ENCODE measurements at regions of chr11 and their contacts with region 1.

Region 1: DNA sequence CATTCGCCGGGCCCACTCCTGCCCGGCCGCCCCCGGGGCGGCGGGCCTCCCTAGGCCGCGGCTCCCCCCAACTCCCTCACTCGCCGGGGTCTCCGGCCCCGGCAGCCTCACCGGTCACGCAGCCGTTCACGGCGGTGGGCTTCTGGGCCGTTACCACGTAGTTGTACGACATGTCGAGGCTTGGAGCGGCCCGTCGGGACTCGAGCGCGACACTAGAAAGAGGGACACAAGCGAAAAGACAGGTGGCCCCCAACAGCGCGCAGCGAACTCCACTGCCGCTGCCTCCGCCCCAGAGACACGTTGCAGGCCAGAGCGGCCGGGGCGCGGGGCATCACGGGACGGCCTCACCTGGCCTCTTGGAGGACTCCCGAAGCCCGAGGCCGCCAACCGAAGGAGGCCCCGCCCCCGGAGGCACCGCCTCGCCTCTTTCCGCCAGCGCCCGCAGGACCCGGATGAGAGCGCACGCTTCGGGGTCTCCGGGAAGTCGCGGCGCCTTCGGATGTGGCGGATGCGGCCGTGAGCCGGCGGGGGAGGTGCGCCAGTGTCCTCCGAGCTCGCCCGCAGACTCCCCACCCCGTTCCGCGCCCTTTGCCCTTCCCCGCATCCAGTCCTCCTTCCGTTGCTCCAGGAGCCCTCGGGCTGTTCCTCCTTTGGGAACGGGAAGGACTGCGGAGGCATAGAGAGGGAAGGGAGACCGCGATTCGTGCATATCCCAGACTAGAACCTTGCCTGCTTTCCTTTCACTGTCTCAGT is at the starts of genes DDB1 and TKFC:
- DNase-seq: peak; percentile 97
- H3K4me3 ChIP-seq: peak within 1 kb of the TSS; percentile 79 to 96 (median 92)
- H3K27ac ChIP-seq: peak within 1 kb of the TSS; percentile 86 to 95 (median 90)
- H3K4me1 ChIP-seq: peaks cover 0 to 32% (median 24%) of the 10 kb centered on the region in 4 donors
- H3K27me3 ChIP-seq: no peaks in the 10 kb centered on the region
- CTCF ChIP-seq: no peak
- EP300 ChIP-seq: peak in 1 of 4 donors; percentile 56
- POLR2A ChIP-seq: peak; percentile 65 to 67
- total RNA-seq, gene DDB1: 101 to 108 (median 105) TPM
- total RNA-seq, gene TKFC: 10.8 to 12.0 (median 11.8) TPM

Region 2: DNA sequence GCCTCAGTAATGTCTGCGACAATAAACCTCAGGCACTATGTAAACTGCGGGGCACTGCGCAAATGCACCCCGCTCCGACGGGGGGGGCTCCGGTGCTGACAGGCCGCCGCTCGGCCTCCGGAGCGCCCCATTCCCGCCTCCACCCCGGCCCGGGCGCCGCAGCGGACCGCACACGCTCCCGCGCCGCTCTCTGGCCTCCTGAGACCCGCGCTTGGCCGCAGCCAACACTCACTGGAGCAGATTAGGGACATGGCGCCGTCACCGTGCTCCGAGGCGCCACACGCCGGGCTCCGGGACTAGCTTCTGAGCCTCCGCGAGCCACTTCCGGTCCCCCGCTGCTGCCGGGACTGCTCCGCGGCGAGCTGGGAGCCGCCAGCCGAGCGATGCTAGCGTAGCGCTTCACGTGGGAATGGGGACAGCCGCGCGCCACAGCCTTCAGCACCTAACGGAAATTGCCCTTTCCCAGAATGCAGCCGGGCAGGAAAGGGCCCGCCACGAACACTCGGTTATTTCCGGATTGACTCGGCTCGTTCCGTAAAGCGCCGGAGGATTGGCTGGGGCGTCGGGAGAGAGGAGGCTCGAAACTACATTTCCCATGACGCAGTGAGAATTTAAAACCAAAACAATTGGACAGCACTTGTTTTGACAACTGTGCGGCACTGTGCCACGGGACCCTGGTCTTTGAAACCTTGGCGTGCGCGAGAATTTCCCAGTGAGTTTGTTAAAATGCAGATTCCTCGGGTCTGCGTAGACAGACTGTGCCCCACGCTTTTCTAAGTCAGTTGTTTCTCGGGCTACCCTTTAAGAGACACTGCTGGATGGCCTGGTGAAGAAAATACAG is 426.6 kb before region 1 on chr11 and contains the start of gene PRPF19:
- intact Hi-C with region 1: loop called (anchors 10 kb)
- DNase-seq: peak; percentile 98
- H3K4me3 ChIP-seq: peak within 1 kb of the TSS; percentile 89 to 99 (median 95)
- H3K27ac ChIP-seq: peak within 1 kb of the TSS; percentile 97 to 100 (median 98)
- H3K4me1 ChIP-seq: peaks cover 0 to 29% (median 24%) of the 10 kb centered on the region in 4 donors
- H3K27me3 ChIP-seq: no peaks in the 10 kb centered on the region
- CTCF ChIP-seq: no peak
- EP300 ChIP-seq: peak in 1 of 4 donors; percentile 57
- POLR2A ChIP-seq: peak; percentile 59 to 63
- total RNA-seq, gene PRPF19: 37.1 to 52.5 (median 38.9) TPM

Region 3: DNA sequence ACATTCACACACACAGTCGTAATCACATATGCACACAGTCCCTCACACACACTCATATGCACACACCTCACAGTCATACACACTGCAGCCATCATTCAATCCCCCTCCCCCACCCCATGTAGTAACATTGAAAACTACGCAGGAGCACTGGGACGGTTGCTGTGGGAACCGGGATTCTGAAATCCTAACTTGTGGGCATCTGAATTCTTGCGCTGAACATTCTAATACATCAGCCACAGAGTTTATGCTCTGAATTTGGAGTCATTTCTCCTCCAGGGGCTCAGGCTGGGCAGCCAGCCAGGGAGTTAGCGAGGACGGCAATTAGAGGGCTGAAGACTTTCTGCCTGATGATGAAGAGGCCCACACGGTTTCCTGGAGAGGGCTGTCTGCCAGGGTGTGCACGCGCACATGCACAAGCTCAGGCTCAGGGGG is 328.8 kb before region 1 on chr11:
- intact Hi-C with region 1: no loop called
- DNase-seq: no peak
- H3K4me3 ChIP-seq: no peak overlapping the region
- H3K27ac ChIP-seq: no peak overlapping the region
- H3K4me1 ChIP-seq: peaks cover 0 to 18% (median 12%) of the 10 kb centered on the region in 4 donors
- H3K27me3 ChIP-seq: peaks cover 15 to 35% (median 29%) of the 10 kb centered on the region in 3 donors
- CTCF ChIP-seq: no peak
- EP300 ChIP-seq: no peak
- POLR2A ChIP-seq: no peak

Region 4: DNA sequence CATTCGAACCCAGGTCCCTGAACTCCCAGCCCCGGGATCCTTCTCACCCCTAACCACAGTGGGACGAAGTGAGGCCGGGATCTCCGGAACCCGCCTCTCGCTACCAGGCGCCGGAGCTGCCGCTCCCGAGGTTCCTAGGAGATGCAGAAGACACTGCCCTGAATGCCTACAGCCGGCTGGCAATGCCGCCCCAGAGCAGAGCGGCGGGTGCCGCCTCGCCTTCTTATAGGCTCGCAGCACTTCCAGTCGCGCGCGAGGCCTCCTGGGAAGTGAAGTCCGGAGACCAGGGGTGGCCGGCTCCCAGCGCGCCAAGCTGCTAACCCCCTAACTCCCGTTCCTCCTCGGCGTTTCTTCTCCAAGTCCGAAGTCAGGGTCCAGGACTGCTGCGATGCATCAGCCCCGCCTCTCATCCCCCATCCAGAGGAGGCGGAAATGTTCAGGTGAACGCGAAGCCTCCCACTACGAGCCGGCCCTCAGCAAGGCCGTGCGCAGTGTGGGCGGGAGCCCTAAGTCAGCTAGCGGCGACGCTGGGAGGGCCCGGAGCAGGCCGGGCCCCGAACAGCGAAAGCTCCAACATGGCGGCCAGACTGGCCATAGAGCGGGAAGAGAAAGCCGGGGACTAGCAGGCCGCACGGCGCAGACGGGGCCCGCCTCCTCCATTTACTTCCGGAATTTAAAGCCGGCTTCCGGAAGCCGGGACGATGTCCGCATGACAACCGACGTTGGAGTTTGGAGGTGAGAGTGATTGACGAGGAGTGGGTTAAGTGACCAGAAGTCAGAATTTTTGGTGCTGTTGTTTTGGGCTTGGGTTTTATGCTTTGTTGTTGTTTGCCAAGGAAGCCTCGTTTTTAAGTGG is 28.9 kb after region 1 on chr11 and contains the starts of genes CYB561A3 and TMEM138:
- intact Hi-C with region 1: loop called (anchors 1 kb)
- DNase-seq: peak; percentile 97
- H3K4me3 ChIP-seq: peak within 1 kb of the TSS; percentile 56 to 70 (median 64)
- H3K27ac ChIP-seq: peak within 1 kb of the TSS; percentile 90 to 100 (median 96)
- H3K4me1 ChIP-seq: peaks cover 2 to 30% (median 27%) of the 10 kb centered on the region in 4 donors
- H3K27me3 ChIP-seq: no peaks in the 10 kb centered on the region
- CTCF ChIP-seq: no peak
- EP300 ChIP-seq: no peak
- POLR2A ChIP-seq: peak; percentile 47 to 85
- total RNA-seq, gene CYB561A3: 17.3 to 39.6 (median 30.5) TPM
- total RNA-seq, gene TMEM138: 13.5 to 33.8 (median 21.0) TPM

Region 5: DNA sequence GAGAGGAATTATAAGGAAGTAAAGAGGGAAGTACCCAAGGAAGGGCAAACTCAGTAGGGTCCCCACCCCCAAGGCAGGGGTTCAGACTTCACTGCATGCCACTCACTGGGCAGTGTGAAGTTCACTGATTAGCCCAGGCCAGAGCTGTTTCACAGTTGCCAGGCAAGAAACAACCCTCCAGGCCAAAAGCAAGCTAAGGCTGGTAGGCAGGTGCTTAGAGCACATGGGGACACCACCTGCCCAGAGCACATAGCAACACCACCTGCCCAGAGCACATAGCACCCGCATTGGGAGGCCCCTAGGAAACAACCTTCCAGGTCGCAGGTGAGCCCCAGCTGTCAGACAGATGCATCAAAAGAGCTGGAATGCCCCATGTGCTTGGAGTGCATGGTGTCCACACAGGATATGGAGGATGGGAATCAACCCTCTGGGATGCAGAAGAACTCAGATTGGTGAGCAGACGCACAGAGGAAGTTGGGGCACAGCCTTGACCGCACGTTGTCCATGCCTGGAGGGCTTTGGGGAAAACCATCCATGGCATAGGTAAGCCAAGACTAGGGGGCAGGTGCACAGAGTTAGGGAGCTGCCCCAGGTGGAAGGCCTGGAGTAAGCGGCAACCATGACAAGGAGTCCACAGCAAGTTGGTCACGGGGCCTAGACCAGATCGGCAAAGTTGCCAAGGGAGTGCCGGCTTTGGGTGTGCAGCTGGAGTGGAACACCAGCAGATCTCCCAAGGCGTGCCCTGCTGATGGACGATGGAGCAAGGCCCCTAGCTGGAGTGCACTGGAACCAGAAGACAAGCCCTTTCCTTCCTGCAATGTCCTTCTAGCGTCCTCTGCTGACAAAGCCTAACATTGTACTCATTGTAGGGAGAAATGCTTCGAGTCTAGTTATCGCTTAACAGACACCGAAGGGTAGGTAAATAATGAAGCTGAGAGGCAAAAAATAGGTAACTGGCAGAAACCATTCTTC is 51.6 kb after region 1 on chr11:
- intact Hi-C with region 1: loop called (anchors 1 kb)
- DNase-seq: no peak
- H3K4me3 ChIP-seq: no peak overlapping the region
- H3K27ac ChIP-seq: no peak overlapping the region
- H3K4me1 ChIP-seq: peaks cover 0 to 7% (median 3%) of the 10 kb centered on the region in 4 donors
- H3K27me3 ChIP-seq: no peaks in the 10 kb centered on the region
- CTCF ChIP-seq: no peak
- EP300 ChIP-seq: no peak
- POLR2A ChIP-seq: no peak